Endothelial cell of umbilical vein (primary cell): ENCODE measurements at regions of chr7 and their contacts with region 1.

Region 1: DNA sequence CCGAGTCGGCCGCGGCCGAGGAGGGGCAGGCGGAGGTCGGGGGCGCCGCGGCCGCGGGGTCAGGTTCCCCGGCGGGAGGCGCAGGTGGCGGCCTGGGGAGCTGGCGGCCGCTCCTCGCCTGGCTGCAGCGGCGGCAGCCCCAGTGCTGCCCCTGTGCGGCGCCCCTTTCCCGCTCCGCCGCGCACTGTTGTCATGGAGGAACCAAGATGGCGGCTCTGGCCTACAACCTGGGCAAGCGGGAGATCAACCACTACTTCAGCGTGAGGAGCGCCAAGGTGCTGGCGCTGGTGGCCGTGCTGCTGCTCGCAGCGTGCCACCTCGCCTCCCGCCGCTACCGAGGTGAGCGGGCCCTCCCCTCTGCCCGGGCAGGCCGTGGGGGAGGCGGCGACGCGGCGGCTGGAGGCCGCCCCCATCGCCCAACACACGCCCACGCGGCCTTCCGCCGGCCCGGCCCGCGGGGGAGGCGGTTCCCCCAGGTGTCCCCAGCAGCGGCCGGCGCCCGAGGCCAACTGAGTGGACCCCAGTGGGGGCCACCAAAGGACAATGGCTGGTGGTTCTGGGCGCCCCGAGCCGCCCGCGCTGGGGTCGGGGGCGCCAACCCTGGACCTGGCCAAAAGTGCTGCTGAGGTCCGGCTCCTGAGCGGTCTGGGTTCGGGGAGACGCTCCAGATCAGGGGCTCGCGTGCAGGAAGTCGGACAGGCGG is 421 bp downstream of the CASD1 start:
- DNase-seq: peak; percentile 69
- H3K4me3 ChIP-seq: peak overlapping the region; percentile 59 to 80 (median 60)
- H3K27ac ChIP-seq: peak overlapping the region; percentile 65
- H3K4me1 ChIP-seq: peaks cover 20% of the 10 kb centered on the region
- H3K27me3 ChIP-seq: no peaks in the 10 kb centered on the region
- CTCF ChIP-seq: peak in 1 of 2 donors; percentile 47
- POLR2A ChIP-seq: peak; percentile 55

Region 2: DNA sequence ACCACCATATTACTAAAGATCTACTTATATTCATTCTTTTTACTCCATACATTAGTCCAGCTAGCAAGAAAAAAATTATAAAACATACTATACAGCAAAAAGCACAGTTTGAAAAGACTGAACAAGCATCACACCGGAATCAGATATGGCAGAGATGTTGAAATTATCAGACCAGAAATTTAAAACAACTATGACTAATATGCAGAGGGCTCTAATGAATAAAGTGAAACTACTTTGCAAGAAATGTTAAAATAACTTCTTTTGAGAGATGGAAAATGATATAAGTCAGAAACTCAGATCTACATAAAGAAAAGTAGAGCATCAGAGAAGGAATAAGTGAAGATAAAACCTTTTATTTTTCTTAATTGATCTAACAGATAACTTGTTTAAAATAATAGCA is 95.0 kb after region 1 on chr7:
- CTCF ChIA-PET with region 1: no interaction called
- POLR2A ChIA-PET with region 1: no interaction called
- dilution Hi-C with region 1: no loop called
- intact Hi-C with region 1: loop called (anchors 10 kb)
- DNase-seq: no peak
- H3K4me3 ChIP-seq: no peak overlapping the region
- H3K27ac ChIP-seq: no peak overlapping the region
- H3K4me1 ChIP-seq: no peaks in the 10 kb centered on the region
- H3K27me3 ChIP-seq: no peaks in the 10 kb centered on the region
- CTCF ChIP-seq: no peak
- POLR2A ChIP-seq: no peak

Region 3: DNA sequence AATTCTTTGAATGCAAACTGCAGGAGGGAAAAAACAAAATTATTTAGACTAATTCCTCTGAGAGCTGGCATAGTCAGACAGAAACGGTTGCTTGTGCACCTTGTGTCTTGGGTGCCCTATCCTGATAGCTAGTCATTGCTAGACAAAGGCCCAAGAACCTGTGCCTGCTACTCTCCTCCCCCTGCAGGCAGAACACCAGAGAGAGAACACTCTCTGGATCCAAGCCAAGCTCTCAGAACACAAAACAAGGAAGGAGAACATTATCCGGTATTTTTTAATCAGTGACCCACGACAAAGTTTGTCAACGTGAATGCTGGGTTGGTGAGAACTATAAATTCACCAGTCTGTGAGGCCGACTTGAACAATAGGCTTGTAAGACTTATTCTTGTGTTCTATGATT is 378.5 kb after region 1 on chr7:
- CTCF ChIA-PET with region 1: interaction called, 3 read pairs
- POLR2A ChIA-PET with region 1: no interaction called
- dilution Hi-C with region 1: no loop called
- intact Hi-C with region 1: loop called (anchors 1 kb)
- DNase-seq: peak; percentile 85
- H3K4me3 ChIP-seq: no peak overlapping the region
- H3K27ac ChIP-seq: no peak overlapping the region
- H3K4me1 ChIP-seq: peaks cover 3% of the 10 kb centered on the region
- H3K27me3 ChIP-seq: no peaks in the 10 kb centered on the region
- CTCF ChIP-seq: peak; percentile 10 to 44
- POLR2A ChIP-seq: no peak

Region 4: GRCh38 chr7:95199779-95200558 is 689.9 kb after region 1 on chr7:
- CTCF ChIA-PET with region 1: no interaction called
- POLR2A ChIA-PET with region 1: no interaction called
- dilution Hi-C with region 1: no loop called
- intact Hi-C with region 1: loop called (anchors 5 kb)
- DNase-seq: peak; percentile 41
- H3K4me3 ChIP-seq: no peak overlapping the region
- H3K27ac ChIP-seq: no peak overlapping the region
- H3K4me1 ChIP-seq: no peaks in the 10 kb centered on the region
- H3K27me3 ChIP-seq: no peaks in the 10 kb centered on the region
- CTCF ChIP-seq: peak; percentile 49 to 65
- POLR2A ChIP-seq: no peak